ENCODE measurements at regions of chr3 and their contacts with region 1.

Region 1: GRCh38 chr3:71583566-71584449 is at the start of gene FOXP1:
- DNase-seq: peak; percentile 51
- ATAC-seq: peak; percentile 87
- H3K4me3 ChIP-seq: peak within 1 kb of the TSS; percentile 52 to 62
- H3K27ac ChIP-seq: peak within 1 kb of the TSS; percentile 48; the same call in 1 of the 2 replicates
- H3K4me1 ChIP-seq: peaks cover 0 to 6% of the 10 kb centered on the region in 2 experiments; a peak in 1 of 4 replicates
- H3K27me3 ChIP-seq: no peaks in the 10 kb centered on the region
- CTCF ChIP-seq: no peak
- POLR2A ChIP-seq: no peak
- RAD21 ChIP-seq: no peak
- total RNA-seq, gene FOXP1: 11.4 TPM

Region 2: DNA sequence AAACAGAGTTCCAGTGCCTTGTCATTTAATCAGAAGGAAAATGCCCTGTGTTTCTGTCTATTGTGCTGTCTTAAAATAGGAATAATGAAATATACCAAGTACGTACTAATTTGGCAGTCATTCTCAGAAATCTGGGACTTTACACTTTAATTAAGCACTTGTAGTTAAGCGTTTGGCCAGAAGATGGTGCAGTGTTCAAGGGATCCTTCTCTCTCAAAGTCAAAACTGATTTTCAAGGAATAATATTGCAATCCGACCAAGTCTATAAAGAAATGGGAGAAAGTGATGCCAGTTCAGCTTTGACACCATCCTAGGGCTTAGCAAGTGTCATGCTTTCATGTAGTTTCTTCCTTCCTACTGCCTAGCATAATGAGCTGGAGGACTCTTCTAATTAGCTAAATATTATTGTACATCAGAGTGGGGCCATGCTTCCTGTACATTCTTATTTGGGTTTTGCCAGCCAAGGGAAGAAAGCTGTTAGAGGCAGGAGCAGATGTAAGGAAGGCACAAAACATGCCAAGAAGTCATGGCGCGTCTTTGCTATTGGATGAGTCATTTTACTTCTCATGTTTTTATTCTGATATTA is 1519.5 kb before region 1 on chr3:
- CTCF ChIA-PET with region 1: no interaction called
- POLR2A ChIA-PET with region 1: no interaction called
- RAD21 ChIA-PET with region 1: no interaction called
- intact Hi-C with region 1: loop called (anchors 2 kb)
- DNase-seq: peak; percentile 4
- ATAC-seq: no peak
- H3K4me3 ChIP-seq: no peak overlapping the region
- H3K27ac ChIP-seq: no peak overlapping the region
- H3K4me1 ChIP-seq: no peaks in the 10 kb centered on the region
- H3K27me3 ChIP-seq: no peaks in the 10 kb centered on the region; the same call in 1 of the 2 replicates
- CTCF ChIP-seq: peak; percentile 11 to 64 (median 34); a peak in 4 of 6 replicates
- POLR2A ChIP-seq: no peak
- RAD21 ChIP-seq: peak; percentile 49; the same call in 1 of the 2 replicates

Region 3: DNA sequence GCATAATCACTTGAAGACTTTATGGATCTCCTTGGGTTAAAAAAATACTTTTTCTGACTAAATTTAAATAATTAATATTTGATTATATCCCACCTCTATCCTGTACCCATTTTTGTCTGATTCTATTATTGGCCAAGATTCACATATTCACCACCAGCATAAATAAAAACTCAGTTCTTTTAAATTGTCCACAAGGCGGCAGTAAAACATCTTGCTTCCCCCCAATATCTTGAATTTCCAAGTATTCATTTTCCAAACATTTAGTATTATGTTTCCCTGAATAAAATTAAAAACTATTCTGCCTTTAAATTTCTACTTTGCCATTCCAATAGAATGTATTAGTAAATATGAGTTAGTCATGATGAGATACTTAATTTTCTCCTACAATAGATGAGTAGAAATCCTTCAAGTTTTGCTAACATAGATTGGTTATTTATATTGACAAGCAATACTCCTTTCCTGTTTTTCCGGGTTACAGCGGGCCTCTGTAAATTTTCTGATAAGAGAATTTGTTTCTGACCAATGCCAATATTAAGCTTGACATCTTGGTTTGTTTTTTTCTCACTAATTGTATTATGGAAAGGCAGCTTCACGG is 1052.6 kb before region 1 on chr3:
- CTCF ChIA-PET with region 1: no interaction called
- POLR2A ChIA-PET with region 1: no interaction called
- RAD21 ChIA-PET with region 1: no interaction called
- intact Hi-C with region 1: loop called (anchors 1 kb)
- DNase-seq: no peak
- ATAC-seq: no peak
- H3K4me3 ChIP-seq: no peak overlapping the region
- H3K27ac ChIP-seq: no peak overlapping the region
- H3K4me1 ChIP-seq: no peaks in the 10 kb centered on the region
- H3K27me3 ChIP-seq: no peaks in the 10 kb centered on the region; the same call in 1 of the 2 replicates
- CTCF ChIP-seq: peak; percentile 19 to 52 (median 28); a peak in 4 of 6 replicates
- POLR2A ChIP-seq: no peak
- RAD21 ChIP-seq: peak; percentile 46; the same call in 1 of the 2 replicates

Region 4: DNA sequence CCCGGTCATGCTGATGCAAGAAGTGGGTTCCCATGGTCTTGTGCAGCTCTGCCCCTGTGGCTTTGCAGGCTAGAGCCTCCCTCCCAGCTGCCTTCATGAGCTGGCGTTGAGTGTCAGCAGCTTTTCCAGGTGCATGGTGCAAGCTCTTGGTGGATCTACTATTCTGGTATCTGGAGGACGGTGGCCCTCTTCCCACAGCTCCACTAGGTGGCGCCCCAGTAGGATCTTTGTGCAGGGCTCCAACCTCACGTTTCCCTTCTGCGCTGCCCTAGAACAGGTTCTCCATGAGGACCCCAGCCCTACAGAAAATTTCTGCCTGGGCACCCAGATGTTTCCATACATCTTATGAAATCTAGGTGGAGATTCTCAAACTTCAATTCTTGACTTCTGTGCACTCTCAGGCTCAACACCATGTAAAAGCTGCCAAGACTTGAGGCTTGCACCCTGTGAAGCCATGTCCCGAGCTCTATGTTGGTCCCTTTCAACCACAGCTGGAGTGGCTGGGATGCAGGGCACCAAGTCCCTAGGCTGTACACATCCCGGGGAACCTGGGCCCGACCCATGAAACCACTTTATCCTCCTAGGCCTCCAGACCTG is 1033.0 kb before region 1 on chr3:
- CTCF ChIA-PET with region 1: interaction called, 4 read pairs
- POLR2A ChIA-PET with region 1: no interaction called
- RAD21 ChIA-PET with region 1: no interaction called
- intact Hi-C with region 1: loop called (anchors 5 kb)
- DNase-seq: no peak
- ATAC-seq: peak; percentile 79
- H3K4me3 ChIP-seq: no peak overlapping the region
- H3K27ac ChIP-seq: no peak overlapping the region
- H3K4me1 ChIP-seq: no peaks in the 10 kb centered on the region
- H3K27me3 ChIP-seq: no peaks in the 10 kb centered on the region
- CTCF ChIP-seq: peak in 2 of 3 experiments; percentile 57; a peak in 4 of 6 replicates
- POLR2A ChIP-seq: no peak
- RAD21 ChIP-seq: peak; percentile 47

Region 5: GRCh38 chr3:71006810-71007785 is 576.7 kb before region 1 on chr3:
- CTCF ChIA-PET with region 1: interaction called, 4 read pairs
- POLR2A ChIA-PET with region 1: no interaction called
- RAD21 ChIA-PET with region 1: interaction called in 1 of 2 experiments, 3 read pairs
- intact Hi-C with region 1: loop called (anchors 5 kb)
- DNase-seq: no peak
- ATAC-seq: peak; percentile 47; the same call in 1 of the 2 replicates
- H3K4me3 ChIP-seq: no peak overlapping the region
- H3K27ac ChIP-seq: no peak overlapping the region
- H3K4me1 ChIP-seq: peaks cover 0 to 3% of the 10 kb centered on the region in 2 experiments; a peak in 1 of 4 replicates
- H3K27me3 ChIP-seq: no peaks in the 10 kb centered on the region
- CTCF ChIP-seq: peak; percentile 11 to 45 (median 15); a peak in 3 of 6 replicates
- POLR2A ChIP-seq: no peak
- RAD21 ChIP-seq: peak; percentile 48

Region 6: GRCh38 chr3:71069797-71070196 is 514.0 kb before region 1 on chr3:
- CTCF ChIA-PET with region 1: no interaction called
- POLR2A ChIA-PET with region 1: no interaction called
- RAD21 ChIA-PET with region 1: no interaction called
- intact Hi-C with region 1: loop called (anchors 10 kb)
- DNase-seq: no peak
- ATAC-seq: peak; percentile 73
- H3K4me3 ChIP-seq: no peak overlapping the region
- H3K27ac ChIP-seq: no peak overlapping the region
- H3K4me1 ChIP-seq: no peaks in the 10 kb centered on the region
- H3K27me3 ChIP-seq: no peaks in the 10 kb centered on the region
- CTCF ChIP-seq: peak; percentile 40 to 55 (median 47); a peak in 5 of 6 replicates
- POLR2A ChIP-seq: no peak
- RAD21 ChIP-seq: peak; percentile 57

Measured in HCT116 (cell line).